ENCODE measurements at regions of chr1 and their contacts with region 1.

Region 1: DNA sequence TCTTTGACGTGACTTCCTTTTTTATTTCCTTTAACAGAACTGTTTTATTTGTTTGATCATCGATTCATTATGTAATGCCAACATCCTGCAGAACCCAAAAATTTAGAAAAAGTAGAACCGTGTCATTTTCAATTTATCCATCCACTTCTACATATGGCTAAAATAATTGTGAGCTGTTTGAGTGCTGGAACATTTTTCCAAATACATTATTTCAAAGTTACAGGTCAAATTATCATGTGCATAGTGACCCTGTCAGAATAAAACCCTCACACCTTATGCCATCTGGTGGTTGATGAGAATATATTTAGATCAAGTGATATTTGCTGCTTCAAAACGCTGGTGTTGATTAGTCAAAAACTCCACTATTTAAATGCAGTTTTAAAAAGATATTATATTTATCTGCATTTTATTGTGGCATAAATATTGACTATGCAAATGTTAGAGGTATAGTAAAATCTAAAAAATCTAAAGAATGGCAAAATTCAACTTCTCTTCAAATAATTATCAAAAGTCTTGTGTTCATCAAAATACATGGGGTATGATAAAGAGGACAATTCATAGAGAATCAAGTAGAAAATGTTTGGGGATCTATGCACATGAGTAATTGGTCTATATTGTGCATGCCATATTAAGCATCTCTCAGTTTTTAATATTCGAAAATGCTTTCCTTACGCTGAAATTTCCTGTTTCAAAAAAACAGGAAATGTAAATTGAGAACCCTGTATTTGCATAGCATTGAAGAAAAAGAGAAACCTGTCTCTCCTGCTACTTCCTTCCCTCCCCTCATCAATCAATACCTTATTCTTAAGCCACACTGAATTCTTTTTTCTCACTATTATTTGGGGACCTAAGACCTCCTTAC is 39.7 kb downstream of the UBE2U start:
- DNase-seq: no peak
- H3K4me3 Mint-ChIP-seq: peak overlapping the region; percentile 40
- H3K27ac Mint-ChIP-seq: no peak overlapping the region
- H3K4me1 Mint-ChIP-seq: peaks cover 21% of the 10 kb centered on the region
- H3K27me3 Mint-ChIP-seq: peaks cover 4% of the 10 kb centered on the region

Region 2: GRCh38 chr1:63575340-63575826 is 667.7 kb before region 1 on chr1:
- CTCF ChIA-PET with region 1: interaction called, 8 read pairs
- intact Hi-C with region 1: loop called (anchors 1 kb)
- DNase-seq: no peak
- H3K4me3 Mint-ChIP-seq: no peak overlapping the region
- H3K27ac Mint-ChIP-seq: no peak overlapping the region
- H3K4me1 Mint-ChIP-seq: no peaks in the 10 kb centered on the region
- H3K27me3 Mint-ChIP-seq: no peaks in the 10 kb centered on the region

Region 3: DNA sequence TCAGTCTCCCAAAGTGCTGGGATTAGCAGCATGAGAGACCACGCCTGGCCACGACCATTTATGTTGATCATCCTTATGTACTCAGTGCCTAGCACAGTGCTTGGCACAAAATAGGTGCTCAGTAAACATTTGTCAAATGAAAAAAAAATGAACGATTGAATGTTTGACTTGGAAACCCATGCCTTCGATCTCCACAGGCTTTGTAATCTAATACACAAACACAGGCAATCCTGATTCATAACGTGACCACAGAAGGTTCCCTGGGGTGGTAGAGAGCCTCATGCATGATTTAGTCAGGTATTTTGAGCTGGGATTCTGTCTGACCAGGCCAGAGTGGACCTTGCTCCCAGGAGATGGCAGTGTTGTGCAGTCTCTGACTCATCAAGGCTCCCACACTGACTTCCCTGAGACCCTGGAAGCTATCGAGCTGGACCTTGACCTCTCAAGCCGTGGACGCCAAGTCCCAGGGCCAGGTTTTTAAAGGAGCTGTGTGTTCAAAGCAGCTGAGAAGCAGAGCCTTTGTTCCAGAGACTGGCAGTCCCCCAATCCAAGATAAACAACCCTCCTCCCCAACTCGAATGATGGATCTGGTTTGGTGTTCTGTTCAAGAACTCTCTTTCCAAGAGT is 568.8 kb before region 1 on chr1:
- CTCF ChIA-PET with region 1: interaction called, 4 read pairs
- intact Hi-C with region 1: loop called (anchors 1 kb)
- DNase-seq: peak; percentile 23
- H3K4me3 Mint-ChIP-seq: no peak overlapping the region
- H3K27ac Mint-ChIP-seq: no peak overlapping the region
- H3K4me1 Mint-ChIP-seq: no peaks in the 10 kb centered on the region
- H3K27me3 Mint-ChIP-seq: no peaks in the 10 kb centered on the region

Region 4: GRCh38 chr1:63773815-63774616 is 469.1 kb before region 1 on chr1 and contains the start of gene ROR1:
- CTCF ChIA-PET with region 1: interaction called, 4 read pairs
- intact Hi-C with region 1: loop called (anchors 1 kb)
- DNase-seq: peak; percentile 87
- H3K4me3 Mint-ChIP-seq: peak within 1 kb of the TSS; percentile 76
- H3K27ac Mint-ChIP-seq: no peak within 1 kb of the TSS
- H3K4me1 Mint-ChIP-seq: peaks cover 17% of the 10 kb centered on the region
- H3K27me3 Mint-ChIP-seq: peaks cover 52% of the 10 kb centered on the region
- total RNA-seq, gene ROR1: 0.10 to 0.14 TPM

Region 5: GRCh38 chr1:64136752-64137411 is 106.2 kb before region 1 on chr1:
- CTCF ChIA-PET with region 1: interaction called, 28 read pairs
- intact Hi-C with region 1: loop called (anchors 1 kb)
- DNase-seq: peak; percentile 86
- H3K4me3 Mint-ChIP-seq: no peak overlapping the region
- H3K27ac Mint-ChIP-seq: no peak overlapping the region
- H3K4me1 Mint-ChIP-seq: no peaks in the 10 kb centered on the region
- H3K27me3 Mint-ChIP-seq: no peaks in the 10 kb centered on the region

Measured in activated naive CD4-positive, alpha-beta T cell treated with anti-CD3 and anti-CD28 coated beads for 36 hours (primary cell).